ENCODE measurements at regions of chr13 and their contacts with region 1.

Region 1: GRCh38 chr13:33723772-33724435 is 94.0 kb upstream of the RFC3 start:
- DNase-seq: peak in 8 of 9 donors; percentile 37 to 68 (median 58)
- ATAC-seq: peak; percentile 93
- H3K4me3 ChIP-seq: no peak overlapping the region
- H3K4me3 Mint-ChIP-seq: peak overlapping the region in 5 of 10 donors; percentile 5 to 65 (median 26)
- H3K27ac ChIP-seq: no peak overlapping the region
- H3K27ac Mint-ChIP-seq: peak overlapping the region in 4 of 9 donors; percentile 6 to 84 (median 27)
- H3K4me1 ChIP-seq: peaks cover 0 to 14% of the 10 kb centered on the region in 2 donors
- H3K4me1 Mint-ChIP-seq: peaks cover 2 to 33% (median 20%) of the 10 kb centered on the region in 7 donors
- H3K27me3 ChIP-seq: no peaks in the 10 kb centered on the region
- H3K27me3 Mint-ChIP-seq: no peaks in the 10 kb centered on the region

Region 2: DNA sequence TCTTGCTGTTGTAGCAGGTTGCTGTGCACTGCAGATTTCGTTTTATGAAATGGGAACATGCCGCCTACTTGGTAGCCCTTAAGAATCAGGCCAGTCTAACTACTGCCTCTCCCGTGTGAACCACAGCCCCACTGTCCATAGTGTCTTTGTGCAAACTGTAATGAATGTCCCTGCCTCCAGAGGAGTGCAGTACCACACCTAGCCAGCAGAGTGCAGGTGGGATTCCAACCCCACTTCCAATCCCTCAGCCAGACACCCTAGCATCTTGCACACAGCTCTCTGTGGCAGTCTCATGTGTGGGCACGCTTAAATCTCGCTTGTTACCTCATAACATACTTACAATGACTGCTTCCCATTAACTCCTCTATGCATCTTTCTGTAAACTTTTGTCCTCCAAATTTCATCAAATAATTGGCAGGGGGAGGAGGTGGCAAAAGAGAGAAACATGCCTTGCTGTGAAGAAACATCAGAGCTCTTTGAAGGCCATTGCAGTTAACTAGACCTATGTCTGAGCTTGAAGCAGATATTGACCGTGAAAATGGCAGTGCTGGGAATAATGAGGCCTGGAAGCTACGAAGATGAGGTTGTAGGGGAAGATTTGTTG is 1456.0 kb before region 1 on chr13:
- CTCF ChIA-PET with region 1: interaction called, 3 read pairs
- POLR2A ChIA-PET with region 1: no interaction called
- intact Hi-C with region 1: loop called in 1 of 2 experiments (anchors 1 kb)
- DNase-seq: peak; percentile 13 to 56 (median 35)
- ATAC-seq: peak; percentile 76
- H3K4me3 ChIP-seq: no peak overlapping the region
- H3K4me3 Mint-ChIP-seq: no peak overlapping the region
- H3K27ac ChIP-seq: no peak overlapping the region
- H3K27ac Mint-ChIP-seq: peak overlapping the region in 1 of 9 donors; percentile 46
- H3K4me1 ChIP-seq: no peaks in the 10 kb centered on the region
- H3K4me1 Mint-ChIP-seq: no peaks in the 10 kb centered on the region
- H3K27me3 ChIP-seq: no peaks in the 10 kb centered on the region
- H3K27me3 Mint-ChIP-seq: no peaks in the 10 kb centered on the region

Region 3: GRCh38 chr13:32639502-32640105 is 1084.3 kb before region 1 on chr13:
- CTCF ChIA-PET with region 1: no interaction called
- POLR2A ChIA-PET with region 1: no interaction called
- intact Hi-C with region 1: loop called in 1 of 2 experiments (anchors 2 kb)
- DNase-seq: peak in 7 of 9 donors; percentile 40 to 60 (median 53)
- ATAC-seq: peak; percentile 95
- H3K4me3 ChIP-seq: no peak overlapping the region
- H3K4me3 Mint-ChIP-seq: no peak overlapping the region
- H3K27ac ChIP-seq: no peak overlapping the region
- H3K27ac Mint-ChIP-seq: no peak overlapping the region
- H3K4me1 ChIP-seq: peaks cover 0 to 12% of the 10 kb centered on the region in 2 donors
- H3K4me1 Mint-ChIP-seq: peaks cover 11 to 43% (median 32%) of the 10 kb centered on the region in 7 donors
- H3K27me3 ChIP-seq: no peaks in the 10 kb centered on the region
- H3K27me3 Mint-ChIP-seq: no peaks in the 10 kb centered on the region

Region 4: GRCh38 chr13:33228648-33229445 is 495.1 kb before region 1 on chr13:
- CTCF ChIA-PET with region 1: interaction called, 31 read pairs
- POLR2A ChIA-PET with region 1: no interaction called
- intact Hi-C with region 1: loop called (anchors 1 kb)
- DNase-seq: peak in 7 of 9 donors; percentile 4 to 49 (median 37)
- ATAC-seq: peak; percentile 75
- H3K4me3 ChIP-seq: no peak overlapping the region
- H3K4me3 Mint-ChIP-seq: no peak overlapping the region
- H3K27ac ChIP-seq: no peak overlapping the region
- H3K27ac Mint-ChIP-seq: peak overlapping the region in 1 of 9 donors; percentile 73
- H3K4me1 ChIP-seq: peaks cover 0 to 4% of the 10 kb centered on the region in 2 donors
- H3K4me1 Mint-ChIP-seq: peaks cover 0 to 8% (median 6%) of the 10 kb centered on the region in 7 donors
- H3K27me3 ChIP-seq: no peaks in the 10 kb centered on the region
- H3K27me3 Mint-ChIP-seq: peaks cover 0 to 5% (median 4%) of the 10 kb centered on the region in 5 donors

Region 5: DNA sequence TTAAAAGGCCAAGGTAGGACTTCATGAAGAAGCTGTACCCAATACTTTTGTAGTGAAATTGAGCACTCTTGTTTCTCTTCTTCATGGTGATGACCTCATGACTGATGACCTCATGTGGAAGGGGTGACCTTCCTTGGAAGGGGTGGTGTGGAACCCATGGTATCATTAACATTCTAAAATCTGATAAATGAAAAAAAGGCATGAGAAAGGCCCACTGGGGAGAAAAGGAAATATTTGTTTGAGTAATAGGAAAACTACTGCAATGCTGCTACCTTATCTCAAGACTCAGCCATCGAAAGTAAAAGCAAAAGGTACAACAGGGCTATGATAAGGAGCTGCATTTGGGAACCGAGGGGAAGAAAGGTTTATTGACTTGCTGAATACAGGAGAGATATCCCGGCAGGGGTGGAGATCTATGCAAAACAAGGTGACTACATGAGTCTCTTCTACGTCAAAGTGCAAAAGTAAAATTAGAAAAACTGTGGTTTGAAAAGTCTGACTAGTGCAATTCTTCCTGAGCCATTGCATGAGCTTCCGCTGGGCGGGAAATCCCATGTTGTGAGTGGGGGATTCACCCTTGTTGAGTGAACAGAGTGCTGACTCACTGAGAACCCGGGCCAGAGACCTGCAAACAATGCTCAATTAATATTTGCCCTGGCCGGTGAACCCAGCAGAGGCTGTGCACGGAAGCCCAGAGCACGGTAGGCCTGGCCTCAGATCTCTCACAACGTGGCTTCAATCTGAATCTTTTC is 44.8 kb before region 1 on chr13:
- CTCF ChIA-PET with region 1: no interaction called
- POLR2A ChIA-PET with region 1: no interaction called
- intact Hi-C with region 1: loop called in 1 of 2 experiments (anchors 1 kb)
- DNase-seq: peak in 1 of 9 donors; percentile 76
- ATAC-seq: peak; percentile 86
- H3K4me3 ChIP-seq: peak overlapping the region; percentile 29
- H3K4me3 Mint-ChIP-seq: peak overlapping the region in 5 of 10 donors; percentile 16 to 64 (median 49)
- H3K27ac ChIP-seq: no peak overlapping the region
- H3K27ac Mint-ChIP-seq: peak overlapping the region in 2 of 9 donors; percentile 76 to 91
- H3K4me1 ChIP-seq: peaks cover 0 to 11% of the 10 kb centered on the region in 2 donors
- H3K4me1 Mint-ChIP-seq: peaks cover 7 to 26% (median 11%) of the 10 kb centered on the region in 7 donors
- H3K27me3 ChIP-seq: no peaks in the 10 kb centered on the region
- H3K27me3 Mint-ChIP-seq: peaks cover 0 to 8% (median 0%) of the 10 kb centered on the region in 5 donors

Region 6: DNA sequence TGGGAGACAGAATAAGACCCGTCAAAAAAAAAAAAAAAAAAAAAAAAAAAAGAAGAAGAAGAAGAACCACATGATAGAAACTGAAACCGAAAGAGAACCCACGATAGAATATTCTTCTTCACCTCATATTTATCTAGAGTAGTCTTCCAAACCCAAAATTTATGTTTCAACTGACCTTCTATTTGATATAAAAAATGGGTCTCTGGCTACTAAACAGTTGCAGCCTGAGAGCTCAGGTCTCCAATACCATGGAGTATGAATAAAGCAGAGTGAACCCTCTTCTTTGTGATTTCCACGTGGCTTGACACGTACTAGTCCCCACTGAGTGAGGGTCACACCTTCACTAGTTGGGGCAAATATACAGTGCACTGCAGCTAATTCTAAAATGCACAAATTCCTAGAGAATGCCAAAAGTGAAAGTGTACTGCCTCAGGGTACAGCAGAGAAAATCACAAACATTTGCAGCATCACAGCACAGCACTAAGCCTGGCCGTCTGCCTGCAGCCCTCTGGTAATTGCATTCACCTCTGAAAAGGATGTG is 63.2 kb after region 1 on chr13:
- CTCF ChIA-PET with region 1: no interaction called
- POLR2A ChIA-PET with region 1: no interaction called
- intact Hi-C with region 1: no loop called
- DNase-seq: peak in 6 of 9 donors; percentile 8 to 50 (median 31)
- ATAC-seq: peak; percentile 56
- H3K4me3 ChIP-seq: peak overlapping the region; percentile 50
- H3K4me3 Mint-ChIP-seq: peak overlapping the region; percentile 70 to 88 (median 86)
- H3K27ac ChIP-seq: peak overlapping the region; percentile 56
- H3K27ac Mint-ChIP-seq: peak overlapping the region; percentile 70 to 93 (median 87)
- H3K4me1 ChIP-seq: peaks cover 6% of the 10 kb centered on the region in 2 donors
- H3K4me1 Mint-ChIP-seq: peaks cover 2 to 28% (median 15%) of the 10 kb centered on the region in 7 donors
- H3K27me3 ChIP-seq: no peaks in the 10 kb centered on the region
- H3K27me3 Mint-ChIP-seq: peaks cover 0 to 12% (median 4%) of the 10 kb centered on the region in 5 donors

Region 7: GRCh38 chr13:35157143-35157755 is 1433.3 kb after region 1 on chr13:
- CTCF ChIA-PET with region 1: no interaction called
- POLR2A ChIA-PET with region 1: no interaction called
- intact Hi-C with region 1: loop called (anchors 2 to 10 kb)
- DNase-seq: peak in 5 of 9 donors; percentile 20 to 46 (median 30)
- ATAC-seq: no peak
- H3K4me3 ChIP-seq: no peak overlapping the region
- H3K4me3 Mint-ChIP-seq: no peak overlapping the region
- H3K27ac ChIP-seq: no peak overlapping the region
- H3K27ac Mint-ChIP-seq: no peak overlapping the region
- H3K4me1 ChIP-seq: no peaks in the 10 kb centered on the region
- H3K4me1 Mint-ChIP-seq: peaks cover under 1 to 15% (median 4%) of the 10 kb centered on the region in 7 donors
- H3K27me3 ChIP-seq: no peaks in the 10 kb centered on the region
- H3K27me3 Mint-ChIP-seq: peaks cover 0 to 3% (median 0%) of the 10 kb centered on the region in 5 donors

Measured in naive thymus-derived CD4-positive, alpha-beta T cell (primary cell).